ENCODE measurements at regions of chr3 and their contacts with region 1.

Region 1: GRCh38 chr3:161349529-161350278 is 21.6 kb downstream of the SPTSSB start:
- DNase-seq: no peak
- H3K4me3 Mint-ChIP-seq: no peak overlapping the region
- H3K27ac Mint-ChIP-seq: peak overlapping the region; percentile 21
- H3K4me1 Mint-ChIP-seq: peaks cover 8% of the 10 kb centered on the region
- H3K27me3 Mint-ChIP-seq: peaks cover 46% of the 10 kb centered on the region

Region 2: GRCh38 chr3:161310649-161311423 is 38.9 kb before region 1 on chr3:
- intact Hi-C with region 1: loop called (anchors 2 kb)
- DNase-seq: peak; percentile 87
- H3K4me3 Mint-ChIP-seq: peak overlapping the region; percentile 14
- H3K27ac Mint-ChIP-seq: peak overlapping the region; percentile 59
- H3K4me1 Mint-ChIP-seq: peaks cover 18% of the 10 kb centered on the region
- H3K27me3 Mint-ChIP-seq: peaks cover 59% of the 10 kb centered on the region